Right cardiac atrium (tissue), 5 donors: ENCODE measurements at regions of chr2 and their contacts with region 1.

Region 1: DNA sequence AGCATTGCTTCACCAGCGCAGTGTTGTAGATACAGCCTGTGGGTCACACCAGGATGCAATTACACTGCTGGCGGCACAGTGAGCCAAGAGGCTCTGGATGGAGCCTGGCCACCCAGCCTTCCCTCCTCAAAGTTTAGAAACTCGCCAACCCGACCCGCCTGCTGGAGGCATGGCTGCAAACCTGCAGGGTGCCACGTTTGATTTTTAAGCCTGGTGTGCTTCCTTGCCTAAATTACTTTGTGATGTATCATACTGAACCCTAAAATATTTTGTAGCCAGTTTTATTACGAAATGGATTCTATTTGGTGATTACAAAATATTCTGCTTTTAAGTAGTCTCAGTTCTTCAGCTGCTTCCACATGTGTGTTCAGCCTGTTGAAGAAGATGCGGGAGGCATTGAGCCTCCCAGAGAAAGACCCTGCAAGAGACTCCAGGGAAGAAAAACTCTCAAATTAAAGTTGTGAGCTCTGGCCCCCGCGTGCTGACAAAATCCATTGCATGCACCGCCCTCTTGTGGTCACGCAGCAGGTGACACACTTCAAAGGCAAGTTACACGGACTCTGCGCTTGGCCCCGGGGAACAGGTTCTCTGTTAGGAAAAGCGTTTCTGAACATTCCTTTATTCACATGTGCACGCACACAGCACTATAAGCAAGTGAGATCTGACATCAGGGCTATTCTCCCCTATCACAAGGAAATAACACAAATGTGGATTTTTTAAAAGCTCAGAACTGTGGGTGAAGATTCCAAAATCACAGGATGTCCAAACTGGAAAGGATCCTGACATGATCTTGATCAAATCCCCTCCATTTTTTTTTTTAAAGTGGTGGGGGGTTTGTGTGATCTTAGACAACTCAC is 63.0 kb upstream of the TWIST2 start:
- DNase-seq: peak; percentile 71 to 88 (median 82)
- ATAC-seq: peak; percentile 86 to 89
- H3K4me3 ChIP-seq: no peak overlapping the region
- H3K27ac ChIP-seq: no peak overlapping the region
- H3K4me1 ChIP-seq: no peaks in the 10 kb centered on the region
- H3K27me3 ChIP-seq: no peaks in the 10 kb centered on the region

Region 2: GRCh38 chr2:238352361-238352760 is 432.5 kb before region 1 on chr2:
- intact Hi-C with region 1: loop called in 1 of 4 experiments (anchors 10 kb)
- DNase-seq: no peak
- ATAC-seq: peak in 1 of 2 donors; percentile 25
- H3K4me3 ChIP-seq: no peak overlapping the region
- H3K27ac ChIP-seq: no peak overlapping the region
- H3K4me1 ChIP-seq: no peaks in the 10 kb centered on the region
- H3K27me3 ChIP-seq: no peaks in the 10 kb centered on the region

Region 3: DNA sequence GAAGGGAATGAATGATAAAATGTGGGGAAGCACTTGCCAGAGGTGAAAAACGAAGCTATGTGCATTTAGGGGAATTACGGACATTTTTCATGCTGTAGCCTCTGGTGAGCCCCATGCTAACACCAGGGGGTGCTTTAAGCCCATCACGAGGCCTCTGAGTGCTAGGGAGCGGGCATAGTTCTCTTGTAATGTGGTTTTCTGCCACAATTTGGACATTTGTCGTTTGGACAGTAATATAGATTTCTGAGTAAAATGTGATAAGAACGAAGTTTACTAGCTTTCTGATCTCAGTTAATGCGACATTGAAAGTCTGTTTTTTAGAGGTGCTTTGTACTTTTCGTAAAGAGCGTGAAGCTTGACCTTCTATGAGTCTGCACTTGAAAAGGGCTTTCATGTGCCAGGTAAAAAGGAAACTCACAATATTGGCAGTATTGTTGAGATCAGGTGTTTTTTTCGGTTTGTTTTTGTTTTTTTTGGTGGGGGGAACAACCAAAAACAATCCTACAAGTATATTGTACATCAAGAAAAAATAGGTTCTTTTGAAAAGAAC is 414.0 kb before region 1 on chr2:
- intact Hi-C with region 1: loop called in 2 of 4 experiments (anchors 10 kb)
- DNase-seq: peak; percentile 53 to 85 (median 76)
- ATAC-seq: peak; percentile 91 to 92
- H3K4me3 ChIP-seq: no peak overlapping the region
- H3K27ac ChIP-seq: no peak overlapping the region
- H3K4me1 ChIP-seq: no peaks in the 10 kb centered on the region
- H3K27me3 ChIP-seq: no peaks in the 10 kb centered on the region

Region 4: GRCh38 chr2:238513346-238513745 is 271.6 kb before region 1 on chr2:
- intact Hi-C with region 1: loop called in 2 of 4 experiments (anchors 5 to 10 kb)
- DNase-seq: no peak
- ATAC-seq: no peak
- H3K4me3 ChIP-seq: no peak overlapping the region
- H3K27ac ChIP-seq: no peak overlapping the region
- H3K4me1 ChIP-seq: no peaks in the 10 kb centered on the region
- H3K27me3 ChIP-seq: no peaks in the 10 kb centered on the region